Calu3 (cell line): ENCODE measurements at regions of chr10 and their contacts with region 1.

Region 1: DNA sequence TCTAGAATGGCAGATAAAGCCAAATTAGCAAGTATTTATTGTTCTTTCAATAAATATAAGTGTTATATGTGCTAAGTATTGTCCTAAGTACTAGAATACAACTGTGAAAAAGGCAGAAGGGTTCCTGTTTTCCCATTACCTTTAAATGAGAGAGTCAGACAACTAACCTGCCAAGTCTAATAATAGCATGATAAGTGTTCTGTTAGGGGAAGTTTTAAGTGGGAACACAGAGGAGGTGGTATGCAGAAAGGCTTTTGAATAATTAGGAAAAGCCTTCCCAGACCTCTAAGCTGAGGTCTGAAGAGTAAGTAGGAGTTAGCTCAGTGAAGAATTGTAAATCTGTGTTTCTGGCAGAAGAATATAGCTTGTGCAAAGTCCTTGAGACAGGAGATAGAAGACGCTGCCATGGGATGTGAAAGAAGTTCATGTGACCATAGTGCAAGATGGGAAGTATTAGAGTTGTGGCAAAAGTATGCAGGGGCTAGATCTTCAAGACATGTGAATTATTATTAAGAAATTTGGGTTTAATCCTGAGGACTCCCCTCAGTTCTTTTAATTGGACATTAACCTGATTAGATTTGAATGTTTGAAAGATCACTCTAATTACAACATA is 12.5 kb downstream of the SHOC2 start:
- DNase-seq: no peak
- H3K4me3 Mint-ChIP-seq: no peak overlapping the region
- H3K27ac Mint-ChIP-seq: no peak overlapping the region
- H3K4me1 Mint-ChIP-seq: no peaks in the 10 kb centered on the region
- H3K27me3 Mint-ChIP-seq: no peaks in the 10 kb centered on the region
- CTCF ChIP-seq: no peak

Region 2: GRCh38 chr10:110137142-110137545 is 794.7 kb before region 1 on chr10:
- CTCF ChIA-PET with region 1: no interaction called
- intact Hi-C with region 1: no loop called
- DNase-seq: no peak
- H3K4me3 Mint-ChIP-seq: no peak overlapping the region
- H3K27ac Mint-ChIP-seq: no peak overlapping the region
- H3K4me1 Mint-ChIP-seq: peaks cover 6% of the 10 kb centered on the region
- H3K27me3 Mint-ChIP-seq: no peaks in the 10 kb centered on the region
- CTCF ChIP-seq: peak; percentile 70

Region 3: GRCh38 chr10:110967645-110968044 is 35.8 kb after region 1 on chr10:
- CTCF ChIA-PET with region 1: no interaction called
- intact Hi-C with region 1: loop called (anchors 5 kb)
- DNase-seq: no peak
- H3K4me3 Mint-ChIP-seq: no peak overlapping the region
- H3K27ac Mint-ChIP-seq: no peak overlapping the region
- H3K4me1 Mint-ChIP-seq: peaks cover 19% of the 10 kb centered on the region
- H3K27me3 Mint-ChIP-seq: no peaks in the 10 kb centered on the region
- CTCF ChIP-seq: no peak